ENCODE measurements at regions of chr6 and their contacts with region 1.

Region 1: DNA sequence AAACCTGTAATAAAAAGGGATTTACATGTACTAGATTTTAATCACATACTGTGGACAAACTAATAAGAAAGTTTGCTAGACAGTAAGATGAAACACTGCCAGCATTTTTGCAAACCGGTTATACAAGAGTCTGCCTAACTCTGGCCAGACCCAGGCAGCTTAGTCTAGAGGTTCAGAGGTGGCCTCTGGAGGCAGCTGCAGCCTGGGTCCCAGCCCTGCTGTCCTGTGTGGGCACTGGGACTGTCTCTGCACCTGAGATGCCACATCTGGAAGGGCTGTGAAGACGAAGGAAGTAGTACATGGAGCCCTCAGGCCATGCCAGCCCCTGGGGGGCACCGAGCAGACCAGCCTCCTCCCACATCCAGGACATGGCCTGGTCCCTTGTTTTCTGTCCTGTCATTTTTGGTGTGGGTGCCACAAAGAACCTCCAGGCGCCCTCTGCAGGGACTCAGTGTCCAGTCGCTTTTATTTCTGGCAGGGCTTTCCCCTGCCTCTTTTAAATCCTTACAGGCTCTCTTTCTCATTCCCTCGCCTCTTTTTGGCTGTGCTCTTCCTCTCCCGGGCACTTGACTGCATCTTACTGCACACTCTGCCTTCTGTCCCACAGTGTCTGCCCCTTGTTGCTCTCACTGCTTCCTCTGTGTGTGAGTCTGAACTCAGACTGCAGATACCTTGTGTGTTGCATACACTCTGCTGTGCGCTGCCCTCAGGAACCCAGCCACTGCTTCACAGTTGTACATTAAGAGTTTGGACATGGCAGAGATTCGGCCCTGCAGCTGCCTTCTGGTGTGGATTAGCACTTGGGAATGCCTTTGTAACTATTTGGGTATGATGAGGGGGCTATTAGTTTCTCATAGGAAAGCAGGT is 216.7 kb downstream of the ZDHHC14 start:
- DNase-seq: no peak
- H3K4me3 ChIP-seq: no peak overlapping the region
- H3K27me3 ChIP-seq: no peaks in the 10 kb centered on the region
- CTCF ChIP-seq: peak; percentile 65

Region 2: DNA sequence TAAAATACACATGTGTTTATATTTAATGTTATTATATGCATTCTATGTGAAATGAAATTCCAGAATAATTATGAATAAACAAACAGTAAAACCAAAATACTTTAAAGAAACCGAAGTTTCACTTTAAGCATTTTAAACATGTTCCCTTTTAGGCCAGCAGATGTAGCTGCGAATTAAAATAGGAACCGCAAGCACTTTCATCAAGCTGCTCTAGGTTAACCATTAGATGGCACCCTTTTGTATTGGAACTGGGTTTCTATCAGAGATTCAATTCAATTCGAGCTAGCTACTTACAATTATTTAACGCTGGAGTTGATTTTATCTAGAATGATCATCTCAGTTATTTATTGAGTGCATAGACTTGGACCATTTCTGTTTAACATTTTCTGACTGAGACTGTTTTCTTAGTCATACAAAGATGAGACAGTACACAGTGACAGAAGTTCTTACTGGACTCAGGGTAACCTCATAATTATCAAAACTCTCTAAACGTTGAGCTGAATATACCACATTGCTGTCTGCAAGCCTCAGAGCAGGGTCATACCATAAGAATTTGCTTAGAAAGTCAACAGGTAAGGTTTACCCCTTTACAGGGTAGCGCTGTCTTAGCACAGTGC is 282.9 kb before region 1 on chr6:
- CTCF ChIA-PET with region 1: interaction called, 10 read pairs
- POLR2A ChIA-PET with region 1: no interaction called
- DNase-seq: peak; percentile 34
- H3K4me3 ChIP-seq: no peak overlapping the region
- H3K27me3 ChIP-seq: no peaks in the 10 kb centered on the region
- CTCF ChIP-seq: peak; percentile 86

Region 3: DNA sequence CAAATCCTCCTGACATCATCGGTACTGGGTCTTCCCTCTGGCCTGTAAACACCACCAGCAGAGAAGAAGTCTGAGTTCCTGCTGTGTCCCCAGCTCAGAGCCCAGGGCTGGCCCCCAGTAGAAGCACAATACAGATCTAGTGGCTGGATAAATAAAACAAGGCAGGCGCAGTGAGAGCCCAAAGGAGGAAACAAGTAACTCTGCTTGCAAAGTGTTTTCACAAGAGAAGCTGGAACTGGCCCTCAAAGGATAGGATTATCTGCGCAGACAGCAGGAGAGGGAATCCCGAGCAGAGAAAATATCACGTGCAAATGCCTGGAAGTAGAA is 11.6 kb before region 1 on chr6:
- CTCF ChIA-PET with region 1: interaction called, 14 read pairs
- POLR2A ChIA-PET with region 1: no interaction called
- DNase-seq: no peak
- H3K4me3 ChIP-seq: no peak overlapping the region
- H3K27me3 ChIP-seq: no peaks in the 10 kb centered on the region
- CTCF ChIP-seq: no peak

Region 4: GRCh38 chr6:157912326-157912725 is 314.6 kb after region 1 on chr6:
- CTCF ChIA-PET with region 1: no interaction called
- POLR2A ChIA-PET with region 1: no interaction called
- DNase-seq: peak; percentile 50
- H3K4me3 ChIP-seq: no peak overlapping the region
- H3K27me3 ChIP-seq: no peaks in the 10 kb centered on the region
- CTCF ChIP-seq: no peak

Measured in BJ (cell line).